Mammary epithelial cell (primary cell): ENCODE measurements at regions of chrX and their contacts with region 1.

Region 1: DNA sequence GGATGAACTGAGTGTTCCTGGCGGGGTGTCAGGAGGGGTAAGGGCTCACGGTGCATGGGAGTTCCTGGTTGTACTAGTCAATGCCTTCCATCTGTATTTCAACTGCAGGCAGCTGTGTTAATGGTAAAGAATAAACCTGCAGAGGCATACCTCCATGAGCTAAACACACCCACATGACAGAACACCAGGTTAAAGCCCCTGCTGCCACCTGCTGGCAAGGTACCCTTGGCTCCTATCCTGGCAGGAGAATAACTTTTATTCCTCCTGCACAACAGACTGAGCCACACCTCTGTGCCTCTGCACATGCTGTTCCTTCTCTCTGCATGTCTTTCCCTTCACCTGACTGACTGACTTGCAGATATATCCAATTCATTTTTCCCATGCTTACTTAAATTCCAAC is 11.1 kb downstream of the ITIH6 start:
- DNase-seq: peak; percentile 19
- H3K4me3 ChIP-seq: no peak overlapping the region
- H3K27ac ChIP-seq: no peak overlapping the region
- H3K4me1 ChIP-seq: no peaks in the 10 kb centered on the region
- H3K27me3 ChIP-seq: no peaks in the 10 kb centered on the region
- CTCF ChIP-seq: peak; percentile 29 to 52

Region 2: DNA sequence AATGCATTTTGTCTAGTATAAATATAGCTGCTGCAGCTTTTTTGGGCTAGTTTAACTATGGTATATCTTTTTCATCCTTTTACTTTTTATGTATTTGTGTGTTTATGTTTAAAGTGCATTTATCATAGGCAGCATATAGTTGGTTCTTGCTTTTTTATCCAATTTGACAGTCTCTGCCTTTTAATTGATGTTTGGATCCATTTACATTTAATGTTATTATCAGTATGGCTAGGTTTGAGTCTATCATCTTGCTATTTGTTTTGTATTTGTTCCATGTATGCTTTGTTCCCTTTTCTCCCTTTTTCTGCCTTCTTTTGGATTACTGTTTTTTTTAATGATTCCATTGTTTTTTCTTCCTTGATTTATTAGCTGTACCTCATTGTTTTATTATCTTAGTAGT is 216.6 kb before region 1 on chrX:
- CTCF ChIA-PET with region 1: no interaction called
- dilution Hi-C with region 1: no loop called
- in situ Hi-C with region 1: no loop called
- intact Hi-C with region 1: loop called (anchors 10 kb)
- DNase-seq: no peak
- H3K4me3 ChIP-seq: no peak overlapping the region
- H3K27ac ChIP-seq: no peak overlapping the region
- H3K4me1 ChIP-seq: no peaks in the 10 kb centered on the region
- H3K27me3 ChIP-seq: no peaks in the 10 kb centered on the region
- CTCF ChIP-seq: no peak

Region 3: DNA sequence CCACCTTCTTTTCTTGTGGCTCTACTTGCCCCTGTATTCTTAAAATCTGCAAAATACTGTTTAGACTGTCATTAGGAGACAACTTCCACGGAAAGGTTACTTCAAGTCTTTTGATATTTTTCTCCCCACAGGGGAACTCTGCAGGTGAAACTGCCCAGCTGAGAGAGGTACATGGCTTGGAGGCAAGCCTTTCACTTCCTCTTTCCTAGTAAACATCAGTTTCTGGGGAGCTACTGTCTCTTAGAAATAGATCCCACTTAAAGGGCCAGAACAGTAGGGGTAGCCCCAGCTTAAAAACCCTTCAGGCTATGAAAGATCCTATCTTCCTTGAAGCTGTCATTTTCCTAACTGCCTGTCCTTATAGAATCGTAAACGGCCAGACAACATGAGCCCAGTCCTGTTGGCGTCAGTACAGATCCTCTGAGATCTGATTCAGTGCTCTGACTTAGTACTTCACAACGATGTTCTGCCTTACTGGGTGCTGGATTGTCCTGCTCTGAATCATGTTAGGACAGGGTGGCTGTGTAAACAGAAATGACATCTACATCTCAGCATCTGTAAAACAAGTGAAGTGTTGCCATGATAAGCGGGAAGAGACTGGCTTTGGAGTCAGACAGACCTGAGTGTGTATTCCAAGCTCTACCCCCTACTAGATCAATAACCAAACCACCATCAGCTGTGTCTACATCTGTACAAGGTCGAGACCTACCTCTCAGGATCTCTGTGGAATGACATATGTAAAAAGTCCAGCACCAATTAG is 91.0 kb before region 1 on chrX:
- CTCF ChIA-PET with region 1: no interaction called
- dilution Hi-C with region 1: no loop called
- in situ Hi-C with region 1: loop called in 1 of 2 experiments (anchors 25 kb)
- intact Hi-C with region 1: loop called (anchors 1 kb)
- DNase-seq: no peak
- H3K4me3 ChIP-seq: no peak overlapping the region
- H3K27ac ChIP-seq: no peak overlapping the region
- H3K4me1 ChIP-seq: no peaks in the 10 kb centered on the region
- H3K27me3 ChIP-seq: no peaks in the 10 kb centered on the region
- CTCF ChIP-seq: no peak